MCF 10A (cell line): ENCODE measurements at regions of chr10 and their contacts with region 1.

Region 1: GRCh38 chr10:59234816-59235429 is 58.5 kb downstream of the PHYHIPL start:
- DNase-seq: peak; percentile 39
- H3K4me3 Mint-ChIP-seq: no peak overlapping the region
- H3K27ac Mint-ChIP-seq: no peak overlapping the region
- H3K4me1 Mint-ChIP-seq: no peaks in the 10 kb centered on the region
- H3K27me3 Mint-ChIP-seq: peaks cover 74% of the 10 kb centered on the region
- CTCF ChIP-seq: peak; percentile 42

Region 2: DNA sequence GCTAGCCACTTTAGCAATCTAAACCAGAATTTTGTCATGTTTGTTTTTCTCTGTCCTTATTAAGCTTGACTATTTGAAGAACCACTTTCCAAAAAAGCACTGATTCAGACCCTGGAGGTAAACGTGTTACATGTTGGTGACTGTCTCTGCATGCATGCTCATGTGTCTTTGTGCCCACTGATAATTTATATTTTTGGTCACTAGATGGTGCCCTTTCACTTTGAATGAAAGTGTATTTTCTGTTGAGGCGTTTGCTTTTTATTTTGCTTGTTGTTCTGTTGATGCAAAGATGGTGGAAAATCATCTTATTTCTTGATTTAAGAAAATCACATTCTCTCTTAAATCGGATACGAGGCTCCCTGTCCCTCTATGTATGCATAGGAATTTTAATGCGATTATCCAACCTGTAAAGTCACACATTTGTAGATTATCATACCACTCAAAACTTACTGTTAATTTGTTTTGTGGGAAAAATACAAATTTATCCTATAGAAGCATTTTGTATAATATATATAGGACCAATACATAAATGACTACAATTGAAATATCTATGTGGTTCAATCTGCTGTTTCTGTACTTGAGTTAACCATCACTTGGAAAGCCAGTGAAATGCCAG is 452.9 kb before region 1 on chr10:
- CTCF ChIA-PET with region 1: interaction called, 4 read pairs
- POLR2A ChIA-PET with region 1: no interaction called
- intact Hi-C with region 1: loop called (anchors 2 kb)
- DNase-seq: peak; percentile 59
- H3K4me3 Mint-ChIP-seq: no peak overlapping the region
- H3K27ac Mint-ChIP-seq: no peak overlapping the region
- H3K4me1 Mint-ChIP-seq: peaks cover 22% of the 10 kb centered on the region
- H3K27me3 Mint-ChIP-seq: no peaks in the 10 kb centered on the region
- CTCF ChIP-seq: peak; percentile 52

Region 3: GRCh38 chr10:59465088-59465487 is 230.2 kb after region 1 on chr10:
- CTCF ChIA-PET with region 1: interaction called, 18 read pairs
- POLR2A ChIA-PET with region 1: no interaction called
- intact Hi-C with region 1: loop called (anchors 1 kb)
- DNase-seq: peak; percentile 36
- H3K4me3 Mint-ChIP-seq: no peak overlapping the region
- H3K27ac Mint-ChIP-seq: no peak overlapping the region
- H3K4me1 Mint-ChIP-seq: no peaks in the 10 kb centered on the region
- H3K27me3 Mint-ChIP-seq: peaks cover 28% of the 10 kb centered on the region
- CTCF ChIP-seq: no peak

Region 4: GRCh38 chr10:59580026-59580863 is 345.3 kb after region 1 on chr10:
- CTCF ChIA-PET with region 1: interaction called, 19 read pairs
- POLR2A ChIA-PET with region 1: interaction called, 4 read pairs
- intact Hi-C with region 1: loop called (anchors 1 kb)
- DNase-seq: peak; percentile 34
- H3K4me3 Mint-ChIP-seq: no peak overlapping the region
- H3K27ac Mint-ChIP-seq: no peak overlapping the region
- H3K4me1 Mint-ChIP-seq: no peaks in the 10 kb centered on the region
- H3K27me3 Mint-ChIP-seq: peaks cover 21% of the 10 kb centered on the region
- CTCF ChIP-seq: peak; percentile 22

Region 5: GRCh38 chr10:60032723-60033122 is 797.8 kb after region 1 on chr10:
- CTCF ChIA-PET with region 1: no interaction called
- POLR2A ChIA-PET with region 1: no interaction called
- intact Hi-C with region 1: loop called (anchors 10 kb)
- DNase-seq: peak; percentile 77
- H3K4me3 Mint-ChIP-seq: no peak overlapping the region
- H3K27ac Mint-ChIP-seq: no peak overlapping the region
- H3K4me1 Mint-ChIP-seq: no peaks in the 10 kb centered on the region
- H3K27me3 Mint-ChIP-seq: no peaks in the 10 kb centered on the region
- CTCF ChIP-seq: peak; percentile 58